ENCODE measurements at regions of chr7 and their contacts with region 1.

Region 1: DNA sequence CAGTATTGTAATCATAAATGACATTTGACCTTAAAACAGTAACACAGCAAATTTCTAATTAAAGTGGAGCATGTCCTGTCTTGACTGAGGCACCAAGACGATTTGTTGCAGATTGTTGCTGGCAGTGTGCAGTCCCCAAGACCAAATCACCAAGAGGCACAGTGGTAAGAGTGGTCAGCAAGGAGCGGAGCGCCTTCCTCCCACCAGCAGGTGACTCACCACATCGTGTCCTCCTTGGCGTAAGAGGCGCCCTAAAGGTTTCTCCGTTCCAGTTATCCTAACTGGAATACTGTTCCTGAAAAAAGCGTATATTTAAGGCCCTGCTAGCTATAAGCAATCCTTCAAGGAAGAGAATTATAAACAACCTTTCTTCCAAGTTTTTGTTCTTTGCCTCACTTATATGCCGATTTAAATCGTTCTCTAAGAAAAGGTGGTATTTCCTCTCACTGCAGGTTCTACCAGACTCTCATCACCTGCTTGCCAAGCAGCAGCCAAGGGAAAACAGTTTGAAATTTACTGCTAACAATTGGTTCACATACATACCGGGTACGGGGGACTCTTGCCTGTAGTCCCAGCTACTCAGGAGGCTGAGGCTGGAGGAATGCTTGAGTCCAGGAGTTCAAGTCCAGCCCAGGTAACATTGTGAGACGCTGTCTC is 10.7 kb upstream of the REPIN1 start:
- DNase-seq: no peak

Region 2: GRCh38 chr7:150390205-150390604 is 32.3 kb after region 1 on chr7:
- intact Hi-C with region 1: loop called (anchors 2 kb)
- DNase-seq: peak in 2 of 42 donors; percentile 1 to 13